Panc1 (cell line): ENCODE measurements at regions of chr9 and their contacts with region 1.

Region 1: DNA sequence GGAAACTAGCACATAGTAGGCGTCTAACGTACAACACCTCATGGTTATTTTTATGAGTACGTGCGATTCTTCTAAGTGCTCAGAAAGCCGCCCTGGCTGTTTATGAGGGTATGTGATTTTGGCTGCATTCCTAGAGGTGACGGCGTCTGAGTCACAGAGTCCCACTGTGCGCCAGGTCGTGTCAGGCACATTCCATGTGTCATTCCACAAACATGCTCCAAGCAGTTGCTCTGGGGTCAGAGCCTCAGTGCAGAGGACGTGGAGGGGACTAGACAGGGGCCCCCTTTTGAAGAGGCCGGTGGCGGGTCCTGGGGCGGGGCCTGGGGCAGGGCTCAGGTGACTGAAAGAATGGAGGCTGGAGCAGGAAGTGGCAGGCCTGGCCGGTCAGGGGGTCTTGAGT is 51.9 kb downstream of the NEK6 start:
- DNase-seq: peak; percentile 96
- ATAC-seq: peak; percentile 93
- H3K4me3 ChIP-seq: no peak overlapping the region
- H3K27ac ChIP-seq: peak overlapping the region; percentile 94
- H3K4me1 ChIP-seq: peaks cover 46% of the 10 kb centered on the region
- H3K27me3 ChIP-seq: no peaks in the 10 kb centered on the region
- CTCF ChIP-seq: no peak

Region 2: GRCh38 chr9:124323904-124324303 is 14.2 kb after region 1 on chr9:
- CTCF ChIA-PET with region 1: no interaction called
- POLR2A ChIA-PET with region 1: interaction called, 12 read pairs
- in situ Hi-C with region 1: no loop called
- intact Hi-C with region 1: no loop called
- DNase-seq: no peak
- ATAC-seq: no peak
- H3K4me3 ChIP-seq: no peak overlapping the region
- H3K27ac ChIP-seq: no peak overlapping the region
- H3K4me1 ChIP-seq: 0 out of 2 replicates have a peak, but pooled peaks cover 3% of the 10 kb centered on the region
- H3K27me3 ChIP-seq: no peaks in the 10 kb centered on the region
- CTCF ChIP-seq: no peak

Region 3: GRCh38 chr9:124654431-124654830 is 344.8 kb after region 1 on chr9:
- CTCF ChIA-PET with region 1: interaction called, 14 read pairs
- POLR2A ChIA-PET with region 1: no interaction called
- in situ Hi-C with region 1: no loop called
- intact Hi-C with region 1: no loop called
- DNase-seq: no peak
- ATAC-seq: no peak
- H3K4me3 ChIP-seq: no peak overlapping the region
- H3K27ac ChIP-seq: peak overlapping the region; percentile 34; the same call in 1 of the 2 replicates
- H3K4me1 ChIP-seq: peaks cover 24% of the 10 kb centered on the region
- H3K27me3 ChIP-seq: no peaks in the 10 kb centered on the region
- CTCF ChIP-seq: no peak